Heart right ventricle (tissue), 16 donors: ENCODE measurements at regions of chr13 and their contacts with region 1.

Region 1: GRCh38 chr13:112942689-112943308 is 26.2 kb upstream of the MCF2L start:
- DNase-seq: peak; percentile 96 to 97
- ATAC-seq: peak; percentile 90 to 96 (median 95)
- H3K4me3 ChIP-seq: peak overlapping the region; percentile 40 to 75 (median 60)
- H3K27ac ChIP-seq: peak overlapping the region in 9 of 10 donors; percentile 45 to 79 (median 75)
- H3K4me1 ChIP-seq: peaks cover 0 to 13% (median 12%) of the 10 kb centered on the region in 9 donors
- H3K27me3 ChIP-seq: peaks cover 0 to 34% (median 0%) of the 10 kb centered on the region in 7 donors
- CTCF ChIP-seq: peak; percentile 95 to 99 (median 96)

Region 2: DNA sequence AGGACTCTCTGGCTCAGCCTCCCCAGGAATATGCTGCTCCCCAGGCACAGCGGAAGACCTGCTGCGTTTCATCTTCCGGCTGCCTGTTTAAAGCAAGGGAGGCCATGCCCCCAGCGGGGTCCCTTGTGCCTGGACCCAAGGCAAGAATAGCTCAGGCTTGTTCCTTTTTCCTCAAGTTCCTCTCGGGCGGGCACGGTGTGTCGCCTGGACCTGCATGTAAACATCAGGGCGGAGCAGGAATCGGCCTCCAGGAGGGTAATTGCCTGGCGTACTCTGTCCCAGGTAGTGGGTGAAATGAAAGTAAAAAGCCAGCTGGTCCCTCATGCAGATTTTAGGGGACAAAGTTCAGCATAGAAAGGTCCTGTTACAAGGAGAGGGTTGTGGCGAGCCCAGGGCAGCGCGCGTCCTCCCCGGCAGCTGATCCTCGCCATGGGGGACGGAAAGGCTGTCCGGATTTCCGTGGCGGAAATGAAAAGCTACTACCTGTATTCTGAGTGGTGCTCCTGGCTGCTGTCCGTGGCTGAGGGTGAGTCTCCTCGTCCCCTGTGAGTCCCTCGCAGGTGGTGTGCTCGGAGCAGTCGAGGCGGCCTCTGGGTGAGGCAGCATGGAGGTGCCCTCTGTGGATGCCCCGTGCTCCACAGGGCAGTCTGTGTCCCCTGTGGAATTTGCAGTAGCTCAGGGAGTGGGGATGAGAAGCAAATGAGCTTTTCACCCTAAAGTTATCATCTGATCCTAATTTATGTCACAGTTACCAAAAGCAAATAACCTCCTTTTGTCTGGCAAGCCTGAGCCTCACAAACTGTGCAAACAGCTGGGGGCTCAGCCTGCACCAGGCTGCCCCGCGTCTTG is 42.4 kb after region 1 on chr13:
- intact Hi-C with region 1: loop called in 2 of 10 experiments (anchors 1 to 5 kb)
- DNase-seq: no peak
- ATAC-seq: no peak
- H3K4me3 ChIP-seq: peak overlapping the region in 7 of 10 donors; percentile 3 to 68 (median 13)
- H3K27ac ChIP-seq: peak overlapping the region in 8 of 10 donors; percentile 8 to 56 (median 41)
- H3K4me1 ChIP-seq: peaks cover 2 to 69% (median 41%) of the 10 kb centered on the region in 9 donors
- H3K27me3 ChIP-seq: no peaks in the 10 kb centered on the region
- CTCF ChIP-seq: no peak

Region 3: DNA sequence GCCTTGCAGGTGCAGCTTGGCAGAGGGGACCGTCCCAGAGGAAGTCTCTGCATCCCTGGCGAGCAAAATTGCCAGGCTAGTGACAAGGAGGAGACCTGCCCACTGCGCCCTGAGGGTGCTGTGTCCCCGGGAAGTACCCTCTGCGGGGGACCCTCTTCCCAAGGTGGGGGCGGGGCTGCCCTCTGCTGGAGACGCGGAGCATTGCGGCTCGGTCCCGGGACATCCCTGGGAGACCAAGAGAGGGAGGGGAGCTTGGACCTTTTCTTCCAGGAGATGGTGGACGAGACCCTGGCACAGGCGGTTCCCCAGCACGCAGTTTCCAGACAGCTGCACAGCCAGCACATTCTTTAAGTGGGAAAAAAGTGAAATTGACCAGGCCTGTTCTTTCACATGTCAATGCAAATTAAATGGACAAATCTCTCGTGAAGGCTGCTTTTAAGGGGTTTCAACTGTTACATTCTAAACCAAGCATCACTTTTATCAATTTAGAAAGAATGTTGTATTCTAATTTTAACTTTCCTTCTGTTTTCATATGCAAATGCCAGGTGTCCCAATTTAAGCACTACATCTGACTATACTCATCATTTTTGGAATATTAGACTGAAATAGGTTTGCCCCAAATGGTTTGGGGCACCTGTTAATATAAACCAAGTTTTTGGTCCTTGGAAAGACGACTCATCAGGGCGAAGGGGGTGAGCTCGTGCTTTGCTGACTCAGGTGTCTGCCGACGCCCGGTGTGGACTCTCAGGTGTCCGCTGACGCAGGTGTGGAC is 86.9 kb after region 1 on chr13:
- intact Hi-C with region 1: loop called (anchors 1 to 10 kb)
- DNase-seq: peak in 1 of 2 donors; percentile 54
- ATAC-seq: peak; percentile 19 to 57 (median 45)
- H3K4me3 ChIP-seq: no peak overlapping the region
- H3K27ac ChIP-seq: no peak overlapping the region
- H3K4me1 ChIP-seq: peaks cover 0 to 15% (median 0%) of the 10 kb centered on the region in 9 donors
- H3K27me3 ChIP-seq: peaks cover 0 to 4% (median 0%) of the 10 kb centered on the region in 7 donors
- CTCF ChIP-seq: peak; percentile 61 to 88 (median 83)

Region 4: GRCh38 chr13:113209880-113210421 is 267.2 kb after region 1 on chr13:
- intact Hi-C with region 1: loop called in 2 of 10 experiments (anchors 10 kb)
- DNase-seq: peak in 1 of 2 donors; percentile 54
- ATAC-seq: peak in 2 of 8 donors; percentile 8 to 16
- H3K4me3 ChIP-seq: peak overlapping the region; percentile 40 to 98 (median 86)
- H3K27ac ChIP-seq: peak overlapping the region; percentile 77 to 100 (median 98)
- H3K4me1 ChIP-seq: peaks cover 4 to 81% (median 75%) of the 10 kb centered on the region in 9 donors
- H3K27me3 ChIP-seq: no peaks in the 10 kb centered on the region
- CTCF ChIP-seq: no peak

Region 5: DNA sequence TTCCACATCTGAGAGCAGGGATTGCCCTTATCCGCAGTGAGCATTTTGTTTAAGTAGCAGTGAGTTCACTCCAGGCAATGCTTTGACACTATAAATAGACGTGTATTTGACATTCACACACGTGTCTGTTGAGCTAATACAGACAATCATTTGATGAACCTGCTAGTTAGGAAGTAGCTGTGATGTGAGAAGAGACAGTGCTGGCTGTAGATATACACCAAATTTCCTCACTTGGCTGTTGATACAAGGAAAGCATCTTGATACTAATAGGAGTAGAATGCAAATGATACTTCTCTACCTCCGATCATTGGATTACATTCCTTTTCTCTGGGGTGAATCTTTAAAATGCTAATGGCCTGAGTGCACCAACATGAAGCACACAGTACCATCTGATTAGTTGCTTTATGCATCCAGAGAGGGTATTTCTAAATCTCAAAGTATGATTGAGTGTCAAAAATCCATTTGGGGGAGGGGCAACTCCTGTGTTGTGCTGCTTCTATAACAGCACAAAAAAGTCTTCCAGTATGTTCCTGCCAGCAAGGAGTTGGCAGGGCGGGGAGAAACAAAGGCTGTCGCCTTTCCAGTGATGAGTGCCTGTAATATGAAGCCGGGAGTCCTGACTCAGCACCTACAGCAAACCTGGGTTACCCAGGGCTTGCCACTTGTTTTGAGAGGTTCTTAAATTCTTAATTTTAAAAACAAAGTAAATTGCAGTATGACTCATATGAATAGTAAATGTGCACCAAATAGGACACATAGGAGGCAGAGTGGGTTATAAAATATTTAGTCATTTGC is 273.7 kb after region 1 on chr13:
- intact Hi-C with region 1: loop called in 3 of 10 experiments (anchors 5 to 10 kb)
- DNase-seq: peak in 1 of 2 donors; percentile 51
- ATAC-seq: peak; percentile 75 to 91 (median 84)
- H3K4me3 ChIP-seq: no peak overlapping the region
- H3K27ac ChIP-seq: peak overlapping the region; percentile 38 to 83 (median 73)
- H3K4me1 ChIP-seq: peaks cover 10 to 98% (median 66%) of the 10 kb centered on the region in 9 donors
- H3K27me3 ChIP-seq: no peaks in the 10 kb centered on the region
- CTCF ChIP-seq: no peak

Region 6: GRCh38 chr13:113383089-113383488 is 440.3 kb after region 1 on chr13:
- intact Hi-C with region 1: loop called in 1 of 10 experiments (anchors 10 kb)
- DNase-seq: no peak
- ATAC-seq: no peak
- H3K4me3 ChIP-seq: no peak overlapping the region
- H3K27ac ChIP-seq: no peak overlapping the region
- H3K4me1 ChIP-seq: no peaks in the 10 kb centered on the region
- H3K27me3 ChIP-seq: peaks cover 0 to 4% (median 0%) of the 10 kb centered on the region in 7 donors
- CTCF ChIP-seq: no peak

Region 7: GRCh38 chr13:113393563-113394338 is 451.0 kb after region 1 on chr13:
- intact Hi-C with region 1: loop called in 7 of 10 experiments (anchors 2 to 10 kb)
- DNase-seq: peak; percentile 67 to 84
- ATAC-seq: peak; percentile 77 to 93 (median 85)
- H3K4me3 ChIP-seq: peak overlapping the region; percentile 68 to 97 (median 81)
- H3K27ac ChIP-seq: peak overlapping the region in 9 of 10 donors; percentile 64 to 87 (median 81)
- H3K4me1 ChIP-seq: peaks cover 0 to 28% (median 11%) of the 10 kb centered on the region in 9 donors
- H3K27me3 ChIP-seq: no peaks in the 10 kb centered on the region
- CTCF ChIP-seq: peak; percentile 77 to 98 (median 89)